OCI-LY7 (cell line): ENCODE measurements at regions of chr15 and their contacts with region 1.

Region 1: GRCh38 chr15:56918046-56918938 is at the start of gene TCF12:
- DNase-seq: peak; percentile 95
- H3K4me3 ChIP-seq: peak within 1 kb of the TSS; percentile 80
- H3K27ac ChIP-seq: peak within 1 kb of the TSS; percentile 74
- H3K4me1 ChIP-seq: peaks cover 30% of the 10 kb centered on the region
- CTCF ChIP-seq: peak; percentile 58
- total RNA-seq, gene TCF12: 139 and 214 TPM in 2 replicates

Region 2: GRCh38 chr15:56365075-56365711 is 553.1 kb before region 1 on chr15 and contains the start of gene TEX9:
- CTCF ChIA-PET with region 1: no interaction called
- POLR2A ChIA-PET with region 1: no interaction called
- intact Hi-C with region 1: loop called (anchors 2 kb)
- DNase-seq: peak; percentile 93
- H3K4me3 ChIP-seq: peak within 1 kb of the TSS; percentile 88
- H3K27ac ChIP-seq: peak within 1 kb of the TSS; percentile 93
- H3K4me1 ChIP-seq: peaks cover 18% of the 10 kb centered on the region
- CTCF ChIP-seq: no peak
- total RNA-seq, gene TEX9: 16.9 and 20.0 TPM in 2 replicates

Region 3: DNA sequence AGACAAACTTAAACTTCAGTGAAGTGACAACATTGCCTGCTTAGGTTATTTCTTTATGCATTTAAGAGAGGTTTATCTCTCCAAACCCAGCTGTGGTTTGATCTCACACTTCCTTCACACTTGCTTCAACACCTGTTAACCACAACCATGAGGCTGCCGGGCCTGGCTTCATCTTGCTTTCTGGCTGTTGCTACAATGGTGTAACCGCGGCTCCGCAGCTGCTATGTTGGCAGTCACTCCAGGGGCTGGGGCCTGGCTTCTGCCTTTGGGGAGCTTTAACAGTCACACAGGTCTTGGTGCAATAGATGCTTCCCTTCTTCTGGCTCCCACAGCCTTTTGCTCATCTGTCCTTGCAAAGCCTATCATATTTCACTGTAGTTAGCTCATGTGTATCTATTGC is 380.4 kb before region 1 on chr15:
- CTCF ChIA-PET with region 1: no interaction called
- POLR2A ChIA-PET with region 1: interaction called, 3 read pairs
- intact Hi-C with region 1: loop called (anchors 1 kb)
- DNase-seq: peak; percentile 89
- H3K4me3 ChIP-seq: no peak overlapping the region
- H3K27ac ChIP-seq: peak overlapping the region; percentile 70
- H3K4me1 ChIP-seq: peaks cover 70% of the 10 kb centered on the region
- CTCF ChIP-seq: no peak

Region 4: DNA sequence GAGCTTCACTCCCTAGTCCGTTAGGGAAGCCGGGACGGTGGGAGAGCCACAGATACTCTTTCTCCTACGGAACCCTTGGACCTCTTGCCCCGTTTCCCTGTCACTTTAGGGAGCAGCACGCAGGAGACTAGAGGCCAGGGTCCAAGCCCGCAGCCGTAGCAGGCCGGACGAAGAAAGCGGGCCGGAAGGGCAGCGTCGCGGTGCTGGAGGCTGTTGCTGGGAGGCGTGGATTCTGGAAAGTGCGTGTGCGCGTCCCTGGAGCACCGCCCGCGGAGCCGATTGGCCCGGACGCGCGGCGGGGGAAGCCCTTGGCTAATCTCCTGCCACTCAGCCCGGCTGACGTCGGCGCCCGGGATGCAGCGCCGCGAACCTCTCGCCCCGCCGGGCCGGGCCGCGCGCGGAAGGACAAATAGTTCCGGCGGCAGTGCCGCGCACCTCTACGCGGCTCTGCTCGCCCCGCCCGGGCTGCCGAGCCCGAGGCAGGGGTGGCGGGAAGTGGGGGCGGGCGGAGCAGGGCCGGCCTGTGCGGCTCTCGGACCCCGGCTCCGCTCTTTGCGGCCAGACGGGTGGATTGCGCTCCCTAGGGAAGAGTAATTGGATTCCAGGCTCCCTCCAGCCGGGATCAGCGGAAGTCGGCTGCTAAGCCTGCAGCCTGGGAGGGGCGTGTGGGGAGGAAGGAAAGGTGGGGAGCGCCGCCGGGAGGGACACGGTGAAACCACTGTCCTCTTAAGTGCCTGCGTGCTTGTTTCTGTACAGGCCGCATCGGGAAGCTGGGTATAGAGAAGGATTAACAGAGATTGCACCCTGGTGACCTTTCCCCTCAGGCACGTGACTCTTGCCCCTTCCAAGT is 31.1 kb before region 1 on chr15:
- CTCF ChIA-PET with region 1: no interaction called
- POLR2A ChIA-PET with region 1: no interaction called
- intact Hi-C with region 1: loop called (anchors 1 kb)
- DNase-seq: peak; percentile 83
- H3K4me3 ChIP-seq: peak overlapping the region; percentile 68
- H3K27ac ChIP-seq: peak overlapping the region; percentile 2
- H3K4me1 ChIP-seq: peaks cover 23% of the 10 kb centered on the region
- CTCF ChIP-seq: 0 out of 2 replicates have a peak, but pooled peaks have one; percentile 17

Region 5: GRCh38 chr15:56950979-56951378 is 32.7 kb after region 1 on chr15:
- CTCF ChIA-PET with region 1: no interaction called
- POLR2A ChIA-PET with region 1: no interaction called
- intact Hi-C with region 1: no loop called
- DNase-seq: peak; percentile 24
- H3K4me3 ChIP-seq: no peak overlapping the region
- H3K27ac ChIP-seq: no peak overlapping the region
- H3K4me1 ChIP-seq: peaks cover 12% of the 10 kb centered on the region
- CTCF ChIP-seq: no peak

Region 6: DNA sequence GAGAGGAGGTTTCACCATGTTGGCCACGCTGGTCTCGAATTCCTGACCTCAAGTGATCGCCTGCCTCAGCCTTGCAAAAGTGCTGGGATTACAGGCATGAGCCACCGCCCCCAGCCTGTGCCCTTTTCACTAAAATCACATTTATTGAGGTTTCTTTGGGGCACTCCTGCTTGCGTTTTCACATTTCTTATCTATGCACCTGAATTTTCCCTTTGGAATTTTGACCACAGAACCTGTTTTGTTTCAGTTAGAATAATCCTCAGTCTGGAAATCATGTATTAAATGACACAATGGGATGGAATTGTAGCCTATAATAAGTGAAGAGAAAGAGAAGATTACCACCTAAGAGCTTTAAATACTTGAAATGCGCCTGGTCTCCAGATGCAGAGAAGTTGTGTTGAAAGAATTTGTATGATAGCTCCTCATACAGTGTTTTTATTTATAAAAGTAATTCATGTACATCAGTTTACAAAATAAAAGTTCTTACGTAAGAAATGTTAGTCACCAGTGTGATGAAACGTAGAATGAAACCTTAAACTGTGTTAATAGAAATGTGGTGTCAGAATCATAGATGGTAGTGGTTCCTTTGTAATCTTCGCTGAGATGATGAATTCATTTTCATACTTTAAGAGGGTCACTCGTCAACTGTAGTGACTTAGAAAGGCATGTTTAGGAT is 107.1 kb after region 1 on chr15:
- CTCF ChIA-PET with region 1: no interaction called
- POLR2A ChIA-PET with region 1: no interaction called
- intact Hi-C with region 1: no loop called
- DNase-seq: no peak
- H3K4me3 ChIP-seq: no peak overlapping the region
- H3K27ac ChIP-seq: no peak overlapping the region
- H3K4me1 ChIP-seq: peaks cover 9% of the 10 kb centered on the region
- CTCF ChIP-seq: no peak

Region 7: DNA sequence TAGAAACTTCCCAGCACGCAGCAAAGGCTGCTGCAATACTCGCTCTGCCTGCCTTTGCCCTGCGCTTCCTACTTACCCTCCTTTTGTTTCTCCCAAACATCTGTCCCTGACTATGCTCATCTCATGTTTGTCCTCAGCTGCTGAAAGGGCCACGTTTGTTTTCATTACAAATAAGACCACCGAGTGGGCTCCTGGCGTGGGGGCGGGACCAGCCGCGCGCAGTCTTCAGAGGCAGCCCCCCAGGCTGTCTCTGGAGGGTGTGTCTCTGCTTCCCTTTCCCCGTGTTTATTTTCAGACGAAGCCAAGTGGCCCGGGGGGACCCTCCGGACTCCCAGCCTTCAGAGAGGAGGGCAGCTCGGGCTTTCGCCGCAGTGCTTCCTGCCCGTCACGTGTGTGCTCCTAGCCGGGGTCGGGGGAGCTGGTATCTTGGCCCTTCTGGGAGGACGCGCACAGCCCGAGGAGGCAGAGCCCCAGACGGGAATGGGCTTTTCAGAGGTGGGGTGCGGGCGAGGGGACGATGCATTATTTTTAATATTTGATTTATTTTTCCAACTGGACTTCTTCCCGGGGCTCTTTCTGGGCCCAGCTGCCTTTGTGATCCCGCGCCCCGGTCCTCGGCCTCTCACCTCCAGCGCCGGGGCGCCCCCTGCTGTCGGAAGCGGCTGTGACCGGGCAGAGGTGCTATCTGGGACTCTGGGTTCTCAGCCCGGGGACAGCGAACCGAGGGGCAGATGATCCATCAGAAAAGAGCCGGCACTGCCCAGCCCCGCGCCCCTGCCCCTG is 388.1 kb after region 1 on chr15:
- CTCF ChIA-PET with region 1: no interaction called
- POLR2A ChIA-PET with region 1: no interaction called
- intact Hi-C with region 1: loop called (anchors 2 kb)
- DNase-seq: peak; percentile 81
- H3K4me3 ChIP-seq: peak overlapping the region; percentile 63
- H3K27ac ChIP-seq: no peak overlapping the region
- H3K4me1 ChIP-seq: peaks cover 9% of the 10 kb centered on the region
- CTCF ChIP-seq: peak; percentile 94